MCF 10A (cell line): ENCODE measurements at regions of chr6 and their contacts with region 1.

Region 1: GRCh38 chr6:30769088-30769852 is 24.9 kb upstream of the IER3 start:
- DNase-seq: peak; percentile 94
- H3K4me3 Mint-ChIP-seq: peak overlapping the region; percentile 48
- H3K27ac Mint-ChIP-seq: peak overlapping the region; percentile 76
- H3K4me1 Mint-ChIP-seq: peaks cover 36% of the 10 kb centered on the region
- H3K27me3 Mint-ChIP-seq: no peaks in the 10 kb centered on the region
- CTCF ChIP-seq: no peak

Region 2: GRCh38 chr6:30814136-30815040 is 45.1 kb after region 1 on chr6:
- CTCF ChIA-PET with region 1: interaction called, 14 read pairs
- POLR2A ChIA-PET with region 1: interaction called, 48 read pairs
- intact Hi-C with region 1: loop called (anchors 1 kb)
- DNase-seq: peak; percentile 88
- H3K4me3 Mint-ChIP-seq: no peak overlapping the region
- H3K27ac Mint-ChIP-seq: peak overlapping the region; percentile 92
- H3K4me1 Mint-ChIP-seq: peaks cover 39% of the 10 kb centered on the region
- H3K27me3 Mint-ChIP-seq: no peaks in the 10 kb centered on the region
- CTCF ChIP-seq: no peak